ENCODE measurements at regions of chr1 and their contacts with region 1.

Region 1: GRCh38 chr1:209860293-209860881 is 32.6 kb downstream of the UTP25 start:
- DNase-seq: peak; percentile 58 to 60
- ATAC-seq: peak in 6 of 8 donors; percentile 59 to 81 (median 78)
- H3K4me3 ChIP-seq: no peak overlapping the region
- H3K27ac ChIP-seq: no peak overlapping the region
- H3K4me1 ChIP-seq: no peaks in the 10 kb centered on the region
- H3K27me3 ChIP-seq: peaks cover 0 to 33% (median 22%) of the 10 kb centered on the region in 7 donors
- CTCF ChIP-seq: peak; percentile 66 to 96 (median 87)

Region 2: DNA sequence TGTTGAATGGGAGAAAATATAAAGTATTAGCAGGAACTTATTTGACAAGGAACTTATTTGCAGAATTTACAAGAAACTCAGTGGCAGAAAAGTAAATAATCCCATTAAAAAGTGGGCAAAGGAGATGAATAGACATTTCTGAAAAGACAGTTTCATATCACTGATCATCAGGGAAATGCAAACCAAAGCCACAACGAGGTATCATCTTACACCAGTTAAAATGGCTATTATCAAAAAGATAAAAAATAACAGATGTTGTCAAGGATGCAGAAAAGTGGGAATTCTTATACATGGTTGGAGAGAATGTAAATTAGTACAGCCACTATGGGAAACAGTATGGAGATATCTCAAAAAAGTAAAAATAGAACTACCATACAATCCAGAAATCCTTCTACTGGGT is 138.6 kb after region 1 on chr1:
- intact Hi-C with region 1: loop called in 2 of 10 experiments (anchors 5 kb)
- DNase-seq: no peak
- ATAC-seq: no peak
- H3K4me3 ChIP-seq: no peak overlapping the region
- H3K27ac ChIP-seq: no peak overlapping the region
- H3K4me1 ChIP-seq: no peaks in the 10 kb centered on the region
- H3K27me3 ChIP-seq: peaks cover 0 to 19% (median 3%) of the 10 kb centered on the region in 7 donors
- CTCF ChIP-seq: no peak

Region 3: GRCh38 chr1:210074904-210075303 is 214.5 kb after region 1 on chr1:
- intact Hi-C with region 1: no loop called
- DNase-seq: no peak
- ATAC-seq: no peak
- H3K4me3 ChIP-seq: no peak overlapping the region
- H3K27ac ChIP-seq: no peak overlapping the region
- H3K4me1 ChIP-seq: no peaks in the 10 kb centered on the region
- H3K27me3 ChIP-seq: peaks cover 0 to 3% (median 0%) of the 10 kb centered on the region in 7 donors
- CTCF ChIP-seq: no peak

Measured in heart right ventricle (tissue), 16 donors.